GM12878 (cell line): ENCODE measurements at regions of chr1 and their contacts with region 1.

Region 1: DNA sequence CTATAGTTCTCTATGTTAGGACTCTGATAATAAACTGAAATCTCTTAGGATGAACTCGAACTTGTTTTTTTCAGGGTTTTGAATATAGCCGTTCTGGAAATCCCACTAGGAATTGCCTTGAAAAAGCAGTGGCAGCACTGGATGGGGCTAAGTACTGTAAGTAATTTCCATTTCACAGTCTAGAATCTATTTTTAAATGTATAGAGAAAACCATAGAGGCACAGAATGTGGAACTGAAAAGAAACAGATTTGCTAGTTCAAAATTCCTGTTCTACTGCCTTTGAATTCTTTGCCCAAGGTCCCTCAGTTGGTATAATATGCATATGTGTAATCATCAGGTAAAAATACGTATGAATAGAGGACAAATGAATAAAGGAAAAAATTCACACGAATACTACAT is 4.8 kb downstream of the CTH start:
- DNase-seq: peak; percentile 7
- ATAC-seq: no peak
- H3K4me3 ChIP-seq: no peak overlapping the region
- H3K27ac ChIP-seq: peak overlapping the region; percentile 14; the same call in 1 of the 2 replicates
- H3K4me1 ChIP-seq: peaks cover 29% of the 10 kb centered on the region
- H3K27me3 ChIP-seq: no peaks in the 10 kb centered on the region
- CTCF ChIP-seq: no peak
- EP300 ChIP-seq: no peak
- POLR2A ChIP-seq: no peak
- RAD21 ChIP-seq: no peak

Region 2: DNA sequence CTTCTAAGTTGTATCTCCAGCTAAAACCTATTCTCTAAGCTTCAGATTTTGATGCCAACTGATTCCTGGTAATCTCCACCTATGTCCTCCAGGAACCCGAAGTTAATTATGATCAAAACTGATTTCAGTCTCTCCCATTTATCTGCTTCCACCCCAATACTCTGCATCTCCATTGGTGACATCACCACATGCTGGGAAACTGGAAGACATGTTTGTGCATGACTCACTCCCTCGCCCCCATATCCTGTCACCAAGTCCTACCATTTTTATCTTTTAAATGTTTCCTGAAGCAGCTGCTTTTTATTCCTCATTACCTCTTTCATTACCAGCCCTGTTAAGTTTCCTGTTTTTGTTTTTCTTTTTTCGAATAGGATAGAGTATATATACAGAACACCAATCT is 439.0 kb before region 1 on chr1:
- CTCF ChIA-PET with region 1: no interaction called
- POLR2A ChIA-PET with region 1: no interaction called
- RAD21 ChIA-PET with region 1: no interaction called
- SMC1A ChIA-PET with region 1: no interaction called
- in situ Hi-C with region 1: no loop called
- intact Hi-C with region 1: no loop called
- DNase-seq: no peak
- ATAC-seq: no peak
- H3K4me3 ChIP-seq: no peak overlapping the region
- H3K27ac ChIP-seq: no peak overlapping the region
- H3K4me1 ChIP-seq: no peaks in the 10 kb centered on the region
- H3K27me3 ChIP-seq: no peaks in the 10 kb centered on the region
- CTCF ChIP-seq: no peak
- EP300 ChIP-seq: no peak
- POLR2A ChIP-seq: no peak
- RAD21 ChIP-seq: no peak

Region 3: GRCh38 chr1:70083519-70083918 is 332.4 kb before region 1 on chr1:
- CTCF ChIA-PET with region 1: no interaction called
- POLR2A ChIA-PET with region 1: no interaction called
- RAD21 ChIA-PET with region 1: no interaction called
- SMC1A ChIA-PET with region 1: no interaction called
- in situ Hi-C with region 1: no loop called
- intact Hi-C with region 1: no loop called
- DNase-seq: no peak
- ATAC-seq: peak; percentile 69
- H3K4me3 ChIP-seq: no peak overlapping the region
- H3K27ac ChIP-seq: no peak overlapping the region
- H3K4me1 ChIP-seq: no peaks in the 10 kb centered on the region
- H3K27me3 ChIP-seq: no peaks in the 10 kb centered on the region
- CTCF ChIP-seq: no peak
- EP300 ChIP-seq: no peak
- POLR2A ChIP-seq: no peak
- RAD21 ChIP-seq: no peak

Region 4: GRCh38 chr1:70354332-70355110 is 61.4 kb before region 1 on chr1 and contains the start of gene ANKRD13C:
- CTCF ChIA-PET with region 1: interaction called, 6 read pairs
- POLR2A ChIA-PET with region 1: interaction called, 32 read pairs
- RAD21 ChIA-PET with region 1: interaction called, 23 read pairs
- SMC1A ChIA-PET with region 1: interaction called, 16 read pairs
- in situ Hi-C with region 1: loop called (anchors 5 kb)
- intact Hi-C with region 1: loop called (anchors 2 kb)
- DNase-seq: peak; percentile 83
- ATAC-seq: peak; percentile 89
- H3K4me3 ChIP-seq: peak within 1 kb of the TSS; percentile 88
- H3K27ac ChIP-seq: peak within 1 kb of the TSS; percentile 90
- H3K4me1 ChIP-seq: peaks cover 12% of the 10 kb centered on the region; the same call in 1 of the 2 replicates
- H3K27me3 ChIP-seq: no peaks in the 10 kb centered on the region
- CTCF ChIP-seq: peak in 2 of 3 experiments; percentile 7 to 26; a peak in 1 of 6 replicates
- EP300 ChIP-seq: 0 out of 4 replicates have a peak, but pooled peaks of 1 of the 2 experiments have one; percentile 11
- POLR2A ChIP-seq: peak; percentile 97
- RAD21 ChIP-seq: no peak
- polyA plus RNA-seq, gene ANKRD13C: 3.7 to 5.1 TPM